ENCODE measurements at regions of chr9 and their contacts with region 1.

Region 1: GRCh38 chr9:76393963-76394679 is at the start of gene RFK:
- H3K4me3 ChIP-seq: peak within 1 kb of the TSS; percentile 88
- H3K27ac ChIP-seq: peak within 1 kb of the TSS; percentile 98
- H3K4me1 ChIP-seq: no peaks in the 10 kb centered on the region
- CTCF ChIP-seq: peak; percentile 87

Region 2: GRCh38 chr9:76321205-76321828 is 72.8 kb before region 1 on chr9:
- CTCF ChIA-PET with region 1: interaction called, 11 read pairs
- POLR2A ChIA-PET with region 1: interaction called, 13 read pairs
- H3K4me3 ChIP-seq: no peak overlapping the region
- H3K27ac ChIP-seq: no peak overlapping the region
- H3K4me1 ChIP-seq: no peaks in the 10 kb centered on the region
- CTCF ChIP-seq: no peak

Region 3: DNA sequence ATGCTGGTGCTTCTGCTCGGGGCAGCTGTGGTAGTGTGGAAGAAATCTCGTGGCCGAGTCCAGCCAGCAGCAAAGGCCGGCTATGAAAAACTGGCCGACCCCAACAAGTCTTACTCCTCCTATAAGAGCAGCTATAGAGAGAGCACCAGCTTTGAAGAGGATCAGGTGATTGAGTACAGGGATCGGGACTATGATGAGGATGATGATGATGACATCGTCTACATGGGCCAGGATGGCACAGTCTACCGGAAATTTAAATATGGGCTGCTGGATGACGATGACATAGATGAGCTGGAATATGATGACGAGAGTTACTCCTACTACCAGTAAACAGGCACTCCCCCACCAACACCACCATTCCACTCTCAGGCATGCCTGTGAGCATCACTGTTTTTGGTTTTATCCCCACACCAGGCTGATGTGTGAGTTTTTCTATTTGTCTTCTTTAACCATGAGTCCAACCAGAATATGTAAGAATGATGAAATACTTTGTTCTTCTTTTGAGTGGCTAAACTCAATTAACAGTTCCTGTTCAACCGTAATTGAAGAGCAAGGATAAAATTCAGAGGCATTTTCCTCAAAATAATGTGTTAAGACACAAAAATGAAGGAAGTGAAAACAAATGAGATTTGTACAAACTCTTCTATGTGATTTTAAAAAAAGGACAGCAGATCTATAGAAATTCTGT is 35.4 kb before region 1 on chr9:
- CTCF ChIA-PET with region 1: interaction called, 8 read pairs
- POLR2A ChIA-PET with region 1: interaction called, 15 read pairs
- H3K4me3 ChIP-seq: no peak overlapping the region
- H3K27ac ChIP-seq: no peak overlapping the region
- H3K4me1 ChIP-seq: no peaks in the 10 kb centered on the region
- CTCF ChIP-seq: no peak

Region 4: DNA sequence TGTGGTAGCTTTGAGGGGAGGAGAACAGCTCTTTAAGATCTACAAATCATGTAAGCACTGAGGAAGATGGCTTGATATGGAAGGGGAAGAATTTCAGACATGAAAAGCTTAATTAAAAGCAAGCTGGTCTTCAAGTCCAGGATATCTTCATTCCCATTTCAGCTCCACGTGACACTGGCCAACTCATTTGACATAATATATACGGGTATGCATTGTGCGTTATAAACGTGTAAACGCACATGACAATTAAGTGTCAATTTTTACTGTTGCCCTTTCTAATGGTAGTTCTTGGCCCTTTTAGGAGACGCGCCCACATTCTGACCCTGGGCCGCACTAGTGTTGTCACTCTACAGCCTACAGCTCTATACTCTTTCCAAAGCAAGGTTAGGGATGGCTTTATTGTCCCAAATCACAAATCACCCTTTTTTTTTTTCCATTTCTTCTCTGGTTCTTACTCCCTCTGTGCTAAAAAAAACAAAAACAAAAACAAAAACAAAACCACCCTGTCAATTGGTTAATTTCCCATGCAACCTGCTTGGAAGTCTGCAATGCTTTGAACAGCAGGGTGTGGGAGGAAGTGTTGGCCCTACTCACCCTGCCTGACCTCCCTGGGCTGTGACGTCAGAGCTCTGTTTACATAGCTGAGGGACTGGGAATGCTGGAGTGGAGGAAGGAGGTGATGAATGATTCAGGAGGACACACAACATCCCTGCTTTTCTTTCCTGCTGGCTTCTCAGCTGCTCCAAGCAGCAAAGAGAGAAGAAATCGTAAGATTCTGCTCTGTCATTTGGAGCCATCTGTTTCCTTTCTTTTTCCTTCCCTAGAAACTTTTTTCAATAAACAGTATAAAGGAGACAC is 19.2 kb before region 1 on chr9:
- CTCF ChIA-PET with region 1: interaction called, 13 read pairs
- POLR2A ChIA-PET with region 1: interaction called, 40 read pairs
- H3K4me3 ChIP-seq: no peak overlapping the region
- H3K27ac ChIP-seq: no peak overlapping the region
- H3K4me1 ChIP-seq: peaks cover 20% of the 10 kb centered on the region
- CTCF ChIP-seq: no peak

Region 5: DNA sequence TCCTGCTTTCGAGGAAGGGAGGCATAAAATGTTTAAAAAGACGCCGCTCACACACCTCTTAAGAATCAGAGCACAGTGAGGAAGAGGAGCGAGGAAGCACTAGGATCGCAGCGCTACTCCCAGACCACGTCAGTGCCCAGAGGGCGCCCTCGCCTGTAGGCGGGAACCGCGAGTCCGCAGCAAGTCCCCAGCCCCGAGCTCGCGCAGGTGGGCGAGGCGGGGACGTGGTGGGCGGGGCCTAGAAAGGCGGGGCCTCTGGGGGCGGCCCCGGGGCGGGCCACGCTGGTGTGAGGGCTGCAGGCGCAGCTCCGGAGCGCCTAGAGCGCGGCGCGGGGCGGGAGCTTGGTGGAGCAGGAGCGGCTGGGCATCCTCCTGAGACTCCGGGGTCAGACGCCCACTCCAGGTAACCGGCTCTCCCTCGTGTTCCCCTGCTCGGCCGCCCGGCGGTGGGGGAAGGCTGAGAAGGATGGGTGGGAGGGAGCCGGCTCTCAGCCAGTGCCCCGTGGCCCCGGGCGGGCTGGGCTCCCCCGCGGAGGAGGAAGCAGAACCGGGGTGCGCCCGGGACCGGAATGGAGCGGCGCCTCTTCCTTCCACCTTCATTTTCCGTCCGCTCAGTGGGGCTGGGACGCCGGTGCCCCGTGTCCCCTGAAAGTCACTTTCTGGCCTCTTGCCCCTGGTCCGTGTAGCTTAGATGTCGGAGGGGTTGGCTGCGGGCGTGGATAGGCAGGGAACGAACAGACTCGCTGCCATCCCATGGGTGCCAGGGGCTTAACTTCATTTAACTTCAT is 65.0 kb after region 1 on chr9 and contains the start of gene GCNT1:
- CTCF ChIA-PET with region 1: interaction called, 5 read pairs
- POLR2A ChIA-PET with region 1: interaction called, 11 read pairs
- H3K4me3 ChIP-seq: peak within 1 kb of the TSS; percentile 75
- H3K27ac ChIP-seq: peak within 1 kb of the TSS; percentile 53
- H3K4me1 ChIP-seq: peaks cover 11% of the 10 kb centered on the region
- CTCF ChIP-seq: peak; percentile 57; the same call in 1 of the 2 replicates

Region 6: DNA sequence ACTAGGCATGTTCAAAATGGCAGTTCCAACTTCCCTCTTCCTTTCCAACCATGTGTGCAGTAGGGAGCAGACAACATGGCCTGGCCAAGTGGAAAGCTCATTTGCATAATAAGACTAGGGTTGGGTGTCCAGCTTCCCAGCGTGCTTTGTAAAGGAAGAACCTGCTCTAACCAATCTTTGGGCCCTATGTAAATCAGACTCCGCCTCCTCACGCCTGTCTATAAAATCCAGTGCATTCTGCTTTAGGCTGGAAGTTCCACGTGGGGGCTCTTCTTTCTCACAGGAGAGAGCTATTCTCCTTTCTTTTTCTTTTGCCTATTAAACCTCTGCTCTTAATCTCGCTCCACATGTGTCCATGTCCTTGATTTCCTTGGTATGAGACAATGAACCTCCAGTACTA is 148.2 kb after region 1 on chr9:
- CTCF ChIA-PET with region 1: no interaction called
- POLR2A ChIA-PET with region 1: no interaction called
- H3K4me3 ChIP-seq: no peak overlapping the region
- H3K27ac ChIP-seq: no peak overlapping the region
- H3K4me1 ChIP-seq: 0 out of 2 replicates have a peak, but pooled peaks cover 4% of the 10 kb centered on the region
- CTCF ChIP-seq: no peak

Measured in HEK293 (cell line).